ENCODE measurements at regions of chr2 and their contacts with region 1.

Region 1: GRCh38 chr2:172465417-172466334 is 38.3 kb downstream of the ITGA6 start:
- DNase-seq: peak; percentile 75 to 80 (median 77)
- H3K4me3 ChIP-seq: peak overlapping the region in 1 of 2 donors; percentile 1
- H3K4me3 Mint-ChIP-seq: peak overlapping the region in 7 of 8 donors; percentile 36 to 94 (median 72)
- H3K27ac ChIP-seq: peak overlapping the region; percentile 50
- H3K27ac Mint-ChIP-seq: peak overlapping the region; percentile 63 to 97 (median 90)
- H3K4me1 ChIP-seq: peaks cover 54% of the 10 kb centered on the region
- H3K4me1 Mint-ChIP-seq: peaks cover 45 to 63% (median 52%) of the 10 kb centered on the region in 4 donors
- H3K27me3 ChIP-seq: no peaks in the 10 kb centered on the region
- H3K27me3 Mint-ChIP-seq: no peaks in the 10 kb centered on the region

Region 2: DNA sequence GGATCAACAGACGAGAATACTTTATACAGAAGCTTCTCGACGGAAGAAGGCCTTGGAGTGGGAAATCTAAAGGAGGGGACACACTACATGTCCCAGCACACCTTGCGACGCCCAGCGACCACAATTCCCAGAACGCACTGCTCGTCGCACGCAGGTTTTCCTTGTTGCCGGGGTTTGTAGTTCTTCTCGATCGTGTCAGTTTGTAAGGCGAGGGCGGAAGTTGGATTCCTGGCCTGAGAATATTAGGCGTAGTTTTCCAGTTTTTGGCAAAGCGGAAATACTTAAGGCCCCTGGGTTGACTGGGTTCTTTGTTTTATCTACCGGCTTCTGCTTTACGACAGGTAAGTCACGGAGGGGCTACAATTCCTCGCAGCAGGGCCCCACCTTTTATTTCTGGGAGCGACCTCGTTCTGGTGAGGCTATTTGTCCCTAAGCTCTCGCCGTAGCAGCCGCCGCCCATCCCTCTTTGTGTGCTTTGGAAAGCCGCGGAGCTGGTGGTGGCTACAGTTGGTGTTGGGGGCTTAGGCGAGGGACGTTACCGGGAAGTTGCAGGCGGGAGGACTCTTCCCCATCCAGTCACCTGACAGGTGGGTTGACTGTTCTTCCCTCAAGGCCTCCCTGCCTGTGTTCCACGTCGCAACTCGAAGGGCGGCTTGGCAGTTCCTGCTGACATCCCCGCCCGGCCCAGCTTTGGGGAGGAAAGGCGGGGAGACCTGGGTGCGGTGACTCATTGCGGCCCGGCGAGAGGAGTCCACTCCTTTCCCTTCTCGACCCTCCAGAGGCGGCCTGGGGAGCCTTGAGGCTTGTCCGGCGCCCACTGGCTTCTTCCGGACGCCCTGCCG is 778.2 kb before region 1 on chr2 and contains the start of gene DYNC1I2:
- CTCF ChIA-PET with region 1: interaction called, 6 read pairs
- POLR2A ChIA-PET with region 1: no interaction called
- intact Hi-C with region 1: loop called (anchors 5 kb)
- DNase-seq: peak; percentile 72 to 83 (median 79)
- H3K4me3 ChIP-seq: peak within 1 kb of the TSS; percentile 52 to 75
- H3K4me3 Mint-ChIP-seq: peak within 1 kb of the TSS; percentile 90 to 97 (median 94)
- H3K27ac ChIP-seq: peak within 1 kb of the TSS; percentile 50
- H3K27ac Mint-ChIP-seq: peak within 1 kb of the TSS; percentile 86 to 97 (median 94)
- H3K4me1 ChIP-seq: peaks cover 13% of the 10 kb centered on the region
- H3K4me1 Mint-ChIP-seq: peaks cover 20 to 31% (median 27%) of the 10 kb centered on the region in 4 donors
- H3K27me3 ChIP-seq: no peaks in the 10 kb centered on the region
- H3K27me3 Mint-ChIP-seq: no peaks in the 10 kb centered on the region
- total RNA-seq, gene DYNC1I2: 50.2 to 50.3 TPM

Region 3: GRCh38 chr2:172102391-172103278 is 363.0 kb before region 1 on chr2 and contains the start of gene DLX2:
- CTCF ChIA-PET with region 1: interaction called, 24 read pairs
- POLR2A ChIA-PET with region 1: interaction called, 14 read pairs
- intact Hi-C with region 1: loop called (anchors 2 kb)
- DNase-seq: peak in 3 of 5 donors; percentile 52 to 60 (median 52)
- H3K4me3 ChIP-seq: peak within 1 kb of the TSS; percentile 23 to 60
- H3K4me3 Mint-ChIP-seq: peak within 1 kb of the TSS; percentile 79 to 91 (median 86)
- H3K27ac ChIP-seq: no peak within 1 kb of the TSS
- H3K27ac Mint-ChIP-seq: peak within 1 kb of the TSS in 6 of 7 donors; percentile 54 to 93 (median 86)
- H3K4me1 ChIP-seq: peaks cover 80% of the 10 kb centered on the region
- H3K4me1 Mint-ChIP-seq: peaks cover 25 to 65% (median 51%) of the 10 kb centered on the region in 4 donors
- H3K27me3 ChIP-seq: peaks cover 92% of the 10 kb centered on the region
- H3K27me3 Mint-ChIP-seq: peaks cover 57 to 59% of the 10 kb centered on the region in 2 donors
- total RNA-seq, gene DLX2: not detected

Region 4: DNA sequence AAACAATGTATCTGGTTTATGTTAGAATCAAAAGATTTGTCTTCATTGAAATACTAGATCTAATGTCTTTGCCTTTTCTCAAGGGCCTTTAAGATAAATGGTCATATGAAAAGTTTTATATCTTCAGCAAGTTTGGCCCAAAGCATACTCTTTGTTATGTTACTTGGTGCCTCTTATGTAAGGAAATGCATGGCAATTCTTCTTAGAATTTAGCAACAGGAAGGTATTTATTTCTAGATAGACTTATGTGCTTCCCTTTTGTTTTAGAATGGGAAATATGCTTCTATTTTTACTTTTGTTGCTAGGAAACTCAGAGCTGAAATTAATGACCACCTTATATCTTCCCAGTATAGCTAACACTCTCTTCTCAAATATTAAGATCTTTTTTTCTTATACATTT is 245.6 kb before region 1 on chr2:
- CTCF ChIA-PET with region 1: interaction called, 40 read pairs
- POLR2A ChIA-PET with region 1: interaction called, 3 read pairs
- intact Hi-C with region 1: no loop called
- DNase-seq: no peak
- H3K4me3 ChIP-seq: no peak overlapping the region
- H3K4me3 Mint-ChIP-seq: no peak overlapping the region
- H3K27ac ChIP-seq: no peak overlapping the region
- H3K27ac Mint-ChIP-seq: no peak overlapping the region
- H3K4me1 ChIP-seq: peaks cover 39% of the 10 kb centered on the region
- H3K4me1 Mint-ChIP-seq: peaks cover 16 to 39% (median 19%) of the 10 kb centered on the region in 4 donors
- H3K27me3 ChIP-seq: no peaks in the 10 kb centered on the region
- H3K27me3 Mint-ChIP-seq: peaks cover 1 to 3% of the 10 kb centered on the region in 2 donors

Region 5: GRCh38 chr2:172294983-172295382 is 170.7 kb before region 1 on chr2:
- CTCF ChIA-PET with region 1: no interaction called
- POLR2A ChIA-PET with region 1: no interaction called
- intact Hi-C with region 1: no loop called
- DNase-seq: no peak
- H3K4me3 ChIP-seq: no peak overlapping the region
- H3K4me3 Mint-ChIP-seq: no peak overlapping the region
- H3K27ac ChIP-seq: no peak overlapping the region
- H3K27ac Mint-ChIP-seq: no peak overlapping the region
- H3K4me1 ChIP-seq: no peaks in the 10 kb centered on the region
- H3K4me1 Mint-ChIP-seq: no peaks in the 10 kb centered on the region
- H3K27me3 ChIP-seq: no peaks in the 10 kb centered on the region
- H3K27me3 Mint-ChIP-seq: peaks cover 7 to 13% of the 10 kb centered on the region in 2 donors

Region 6: GRCh38 chr2:172323256-172323655 is 142.4 kb before region 1 on chr2:
- CTCF ChIA-PET with region 1: no interaction called
- POLR2A ChIA-PET with region 1: no interaction called
- intact Hi-C with region 1: no loop called
- DNase-seq: no peak
- H3K4me3 ChIP-seq: no peak overlapping the region
- H3K4me3 Mint-ChIP-seq: no peak overlapping the region
- H3K27ac ChIP-seq: no peak overlapping the region
- H3K27ac Mint-ChIP-seq: no peak overlapping the region
- H3K4me1 ChIP-seq: no peaks in the 10 kb centered on the region
- H3K4me1 Mint-ChIP-seq: peaks cover 0 to 1% (median 0%) of the 10 kb centered on the region in 4 donors
- H3K27me3 ChIP-seq: no peaks in the 10 kb centered on the region
- H3K27me3 Mint-ChIP-seq: peaks cover 0 to 3% of the 10 kb centered on the region in 2 donors

Region 7: DNA sequence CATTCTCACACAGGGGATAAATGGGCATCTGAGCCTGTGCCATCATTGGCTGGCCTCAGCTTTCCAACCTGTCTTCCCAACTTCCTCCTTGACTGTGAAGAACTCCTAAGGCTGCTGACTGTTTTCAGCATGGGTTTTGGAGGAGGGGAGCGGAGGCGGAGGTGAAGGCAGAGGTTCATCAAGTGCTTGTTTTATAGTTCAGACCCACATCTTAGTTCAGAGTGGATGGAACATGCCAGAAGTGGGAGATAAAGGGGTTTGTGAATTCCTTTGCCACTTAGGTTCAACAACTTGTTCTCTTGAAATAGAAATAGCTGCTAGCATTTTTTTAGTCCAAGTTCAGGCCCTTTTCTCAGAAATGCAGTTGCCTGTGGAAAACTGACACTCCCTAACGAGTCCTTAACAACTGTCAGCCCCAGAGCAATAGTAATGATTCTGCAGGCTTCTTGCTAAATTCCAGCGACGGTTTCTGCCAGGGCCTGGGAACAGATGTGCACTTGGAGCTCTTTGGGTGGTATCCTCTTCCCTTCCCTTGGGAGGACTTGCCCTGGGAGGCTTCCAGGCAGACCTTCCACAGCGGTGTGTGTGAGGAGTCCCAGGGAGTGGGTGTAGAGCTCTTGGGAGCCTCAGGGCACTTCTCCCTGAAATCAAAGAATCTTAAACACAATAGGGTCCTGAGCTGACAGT is 68.4 kb before region 1 on chr2:
- CTCF ChIA-PET with region 1: interaction called, 11 read pairs
- POLR2A ChIA-PET with region 1: no interaction called
- intact Hi-C with region 1: no loop called
- DNase-seq: no peak
- H3K4me3 ChIP-seq: no peak overlapping the region
- H3K4me3 Mint-ChIP-seq: no peak overlapping the region
- H3K27ac ChIP-seq: no peak overlapping the region
- H3K27ac Mint-ChIP-seq: no peak overlapping the region
- H3K4me1 ChIP-seq: no peaks in the 10 kb centered on the region
- H3K4me1 Mint-ChIP-seq: peaks cover 0 to 5% (median 1%) of the 10 kb centered on the region in 4 donors
- H3K27me3 ChIP-seq: no peaks in the 10 kb centered on the region
- H3K27me3 Mint-ChIP-seq: peaks cover 0 to 1% of the 10 kb centered on the region in 2 donors

Region 8: GRCh38 chr2:172496160-172496608 is 30.5 kb after region 1 on chr2:
- CTCF ChIA-PET with region 1: interaction called, 25 read pairs
- POLR2A ChIA-PET with region 1: interaction called, 11 read pairs
- intact Hi-C with region 1: no loop called
- DNase-seq: peak; percentile 34 to 65 (median 58)
- H3K4me3 ChIP-seq: peak overlapping the region in 1 of 2 donors; percentile 33
- H3K4me3 Mint-ChIP-seq: peak overlapping the region; percentile 72 to 84 (median 78)
- H3K27ac ChIP-seq: peak overlapping the region; percentile 12
- H3K27ac Mint-ChIP-seq: peak overlapping the region; percentile 78 to 96 (median 94)
- H3K4me1 ChIP-seq: peaks cover 62% of the 10 kb centered on the region
- H3K4me1 Mint-ChIP-seq: peaks cover 39 to 75% (median 58%) of the 10 kb centered on the region in 4 donors
- H3K27me3 ChIP-seq: no peaks in the 10 kb centered on the region
- H3K27me3 Mint-ChIP-seq: no peaks in the 10 kb centered on the region

Region 9: DNA sequence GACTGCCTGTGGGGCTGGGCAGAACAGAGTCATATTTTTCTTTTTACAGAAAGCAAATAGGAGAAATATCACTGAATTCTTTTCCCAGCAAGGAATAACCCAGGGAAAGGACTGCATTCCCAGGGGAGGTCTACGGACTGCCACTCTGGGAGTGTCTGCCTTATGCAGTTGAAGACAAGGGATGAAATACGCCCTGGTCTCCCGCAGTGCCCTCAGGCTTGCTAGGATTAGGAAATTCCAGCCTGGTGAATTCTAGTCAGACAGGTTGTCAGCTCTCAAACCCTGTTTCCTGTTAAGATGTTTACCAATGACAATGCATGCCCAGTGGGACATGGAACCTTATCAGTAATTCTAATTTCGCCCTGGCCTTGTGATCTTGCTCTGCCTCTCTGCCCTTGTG is 59.9 kb after region 1 on chr2:
- CTCF ChIA-PET with region 1: no interaction called
- POLR2A ChIA-PET with region 1: no interaction called
- intact Hi-C with region 1: no loop called
- DNase-seq: no peak
- H3K4me3 ChIP-seq: no peak overlapping the region
- H3K4me3 Mint-ChIP-seq: no peak overlapping the region
- H3K27ac ChIP-seq: no peak overlapping the region
- H3K27ac Mint-ChIP-seq: no peak overlapping the region
- H3K4me1 ChIP-seq: no peaks in the 10 kb centered on the region
- H3K4me1 Mint-ChIP-seq: no peaks in the 10 kb centered on the region
- H3K27me3 ChIP-seq: no peaks in the 10 kb centered on the region
- H3K27me3 Mint-ChIP-seq: no peaks in the 10 kb centered on the region

Region 10: GRCh38 chr2:172540421-172540820 is 74.7 kb after region 1 on chr2:
- CTCF ChIA-PET with region 1: no interaction called
- POLR2A ChIA-PET with region 1: no interaction called
- intact Hi-C with region 1: no loop called
- DNase-seq: no peak
- H3K4me3 ChIP-seq: no peak overlapping the region
- H3K4me3 Mint-ChIP-seq: no peak overlapping the region
- H3K27ac ChIP-seq: no peak overlapping the region
- H3K27ac Mint-ChIP-seq: no peak overlapping the region
- H3K4me1 ChIP-seq: no peaks in the 10 kb centered on the region
- H3K4me1 Mint-ChIP-seq: no peaks in the 10 kb centered on the region
- H3K27me3 ChIP-seq: no peaks in the 10 kb centered on the region
- H3K27me3 Mint-ChIP-seq: peaks cover 0 to 1% of the 10 kb centered on the region in 2 donors

Measured in CD4-positive, alpha-beta memory T cell (primary cell).